Posterior cingulate gyrus (tissue), 11 donors: ENCODE measurements at regions of chr16 and their contacts with region 1.

Region 1: GRCh38 chr16:49350265-49351095 is 23.1 kb upstream of the C16orf78 start:
- DNase-seq: peak; percentile 60 to 97 (median 82)

Region 2: DNA sequence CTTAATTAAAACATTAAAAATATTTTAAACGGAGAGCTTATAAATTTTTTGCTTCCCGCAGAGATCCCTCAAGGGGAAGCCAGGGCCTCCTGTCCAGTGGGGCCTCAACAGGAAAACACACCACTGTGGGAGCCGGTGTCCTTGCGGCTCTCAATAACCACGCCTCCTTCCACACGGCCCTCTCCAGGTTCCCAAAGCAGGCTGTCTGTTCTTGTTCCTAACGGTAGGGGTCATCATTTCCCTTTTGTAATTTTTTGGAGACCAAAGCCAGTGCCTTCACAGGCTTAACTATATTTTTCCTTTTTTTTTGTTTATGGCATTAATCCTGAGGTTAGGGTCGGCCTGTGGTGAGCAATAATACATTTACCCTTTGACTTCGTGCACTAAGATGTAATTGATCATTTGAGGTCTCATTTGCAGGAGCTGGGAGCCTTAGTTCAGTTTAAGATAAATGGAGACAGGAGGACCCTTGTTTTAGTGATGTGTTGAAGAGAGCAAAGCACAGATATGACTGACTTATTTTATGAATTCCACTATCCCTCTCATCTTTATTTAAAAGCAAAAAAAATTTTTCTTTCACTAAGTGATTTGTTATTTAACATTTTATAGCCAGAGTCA is 663.0 kb before region 1 on chr16:
- intact Hi-C with region 1: loop called (anchors 1 kb)
- DNase-seq: peak in 8 of 10 donors; percentile 14 to 89 (median 26)

Region 3: DNA sequence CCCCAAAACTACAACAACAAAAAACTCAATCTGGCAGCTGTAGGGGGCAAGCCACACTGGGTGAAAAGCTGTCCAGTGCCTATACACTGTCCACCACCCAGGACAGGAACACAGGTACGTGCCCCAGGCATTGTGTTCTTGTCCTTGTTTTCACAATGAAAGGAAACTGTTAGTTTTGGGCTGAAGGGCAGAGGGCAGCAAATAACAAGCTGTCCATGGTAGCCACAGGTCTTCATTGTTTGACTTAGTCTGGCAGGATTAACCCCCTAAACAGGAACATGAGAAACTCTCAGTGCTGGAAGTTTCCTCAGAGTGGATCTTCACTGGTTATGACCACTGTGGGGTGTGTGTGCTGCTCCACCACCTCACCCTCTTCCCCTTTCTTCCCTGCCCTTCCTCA is 515.9 kb before region 1 on chr16:
- intact Hi-C with region 1: loop called (anchors 1 kb)
- DNase-seq: no peak